ENCODE measurements at regions of chr3 and their contacts with region 1.

Region 1: GRCh38 chr3:28328188-28329151 is 20.1 kb upstream of the ZCWPW2 start:
- DNase-seq: no peak
- ATAC-seq: peak; percentile 40
- H3K4me3 Mint-ChIP-seq: no peak overlapping the region
- H3K27ac Mint-ChIP-seq: no peak overlapping the region
- H3K4me1 Mint-ChIP-seq: no peaks in the 10 kb centered on the region
- H3K27me3 Mint-ChIP-seq: no peaks in the 10 kb centered on the region
- CTCF ChIP-seq: no peak

Region 2: DNA sequence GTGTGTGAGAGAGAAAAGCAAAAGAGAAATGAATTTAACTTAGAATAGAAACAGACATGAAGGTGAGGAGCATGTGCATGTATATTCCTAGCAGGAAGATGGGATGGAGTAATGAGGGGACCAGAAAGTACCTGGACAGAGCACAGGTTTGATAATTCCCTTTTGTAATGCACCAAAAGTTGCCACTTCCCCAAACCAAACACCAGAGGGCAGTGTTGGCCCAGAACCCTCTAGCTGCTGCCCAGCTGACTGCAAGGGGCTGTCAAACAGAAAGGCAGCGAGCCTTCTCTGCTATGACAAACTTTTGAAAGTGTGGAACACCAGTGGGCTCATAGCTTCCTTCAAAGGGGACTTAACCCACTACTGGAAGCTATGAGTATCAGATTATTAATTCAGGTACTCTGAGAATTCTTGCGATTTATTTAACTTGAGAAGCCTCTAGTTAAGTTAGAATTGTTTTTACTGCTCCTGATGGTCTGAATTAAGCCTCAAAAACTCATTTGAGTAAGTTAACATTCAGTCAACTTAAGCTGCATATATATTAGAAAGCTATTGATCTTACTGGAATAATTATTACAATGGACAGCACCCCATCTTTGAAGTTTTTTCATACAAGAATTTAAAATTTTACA is 1194.2 kb before region 1 on chr3:
- CTCF ChIA-PET with region 1: interaction called, 9 read pairs
- POLR2A ChIA-PET with region 1: no interaction called
- intact Hi-C with region 1: loop called (anchors 1 kb)
- DNase-seq: peak; percentile 27
- ATAC-seq: peak; percentile 71
- H3K4me3 Mint-ChIP-seq: no peak overlapping the region
- H3K27ac Mint-ChIP-seq: no peak overlapping the region
- H3K4me1 Mint-ChIP-seq: no peaks in the 10 kb centered on the region
- H3K27me3 Mint-ChIP-seq: no peaks in the 10 kb centered on the region
- CTCF ChIP-seq: peak; percentile 83

Region 3: DNA sequence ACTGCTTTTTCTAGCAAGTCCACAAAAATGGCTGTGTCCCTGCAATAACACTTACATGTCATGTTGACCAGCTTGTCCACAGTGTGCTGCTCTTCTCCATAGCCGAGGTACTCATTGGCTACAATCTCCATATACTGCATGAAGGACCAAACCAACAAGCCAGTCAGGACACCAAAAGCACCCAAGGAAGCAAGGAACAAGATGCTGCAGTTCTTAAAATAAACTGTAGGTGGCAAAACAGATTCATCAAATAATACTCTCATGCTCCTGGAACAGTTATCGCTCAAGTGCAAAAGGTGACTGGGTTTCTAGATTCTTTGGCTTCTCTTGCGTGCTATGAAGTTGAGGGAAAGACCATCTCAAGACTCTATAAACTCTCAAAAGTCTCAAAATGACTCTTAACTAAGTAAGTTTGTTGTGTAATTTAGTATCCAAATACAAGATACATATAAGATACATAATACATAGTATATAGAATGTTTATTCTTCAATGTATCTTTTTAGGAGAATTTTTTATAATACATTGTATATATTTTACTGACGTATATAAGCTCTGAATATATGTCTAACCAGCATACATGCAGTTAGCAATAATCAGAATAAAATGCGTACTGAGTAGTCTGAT is 1016.3 kb before region 1 on chr3:
- CTCF ChIA-PET with region 1: no interaction called
- POLR2A ChIA-PET with region 1: no interaction called
- intact Hi-C with region 1: loop called (anchors 1 kb)
- DNase-seq: no peak
- ATAC-seq: peak; percentile 70
- H3K4me3 Mint-ChIP-seq: no peak overlapping the region
- H3K27ac Mint-ChIP-seq: no peak overlapping the region
- H3K4me1 Mint-ChIP-seq: no peaks in the 10 kb centered on the region
- H3K27me3 Mint-ChIP-seq: no peaks in the 10 kb centered on the region
- CTCF ChIP-seq: peak; percentile 35

Region 4: GRCh38 chr3:27943106-27943505 is 385.4 kb before region 1 on chr3:
- CTCF ChIA-PET with region 1: no interaction called
- POLR2A ChIA-PET with region 1: no interaction called
- intact Hi-C with region 1: loop called (anchors 2 kb)
- DNase-seq: no peak
- ATAC-seq: no peak
- H3K4me3 Mint-ChIP-seq: no peak overlapping the region
- H3K27ac Mint-ChIP-seq: no peak overlapping the region
- H3K4me1 Mint-ChIP-seq: no peaks in the 10 kb centered on the region
- H3K27me3 Mint-ChIP-seq: no peaks in the 10 kb centered on the region
- CTCF ChIP-seq: no peak

Region 5: GRCh38 chr3:28317438-28318022 is 10.9 kb before region 1 on chr3:
- CTCF ChIA-PET with region 1: interaction called, 8 read pairs
- POLR2A ChIA-PET with region 1: no interaction called
- intact Hi-C with region 1: loop called (anchors 2 kb)
- DNase-seq: no peak
- ATAC-seq: peak; percentile 70
- H3K4me3 Mint-ChIP-seq: no peak overlapping the region
- H3K27ac Mint-ChIP-seq: no peak overlapping the region
- H3K4me1 Mint-ChIP-seq: no peaks in the 10 kb centered on the region
- H3K27me3 Mint-ChIP-seq: no peaks in the 10 kb centered on the region
- CTCF ChIP-seq: no peak

Region 6: DNA sequence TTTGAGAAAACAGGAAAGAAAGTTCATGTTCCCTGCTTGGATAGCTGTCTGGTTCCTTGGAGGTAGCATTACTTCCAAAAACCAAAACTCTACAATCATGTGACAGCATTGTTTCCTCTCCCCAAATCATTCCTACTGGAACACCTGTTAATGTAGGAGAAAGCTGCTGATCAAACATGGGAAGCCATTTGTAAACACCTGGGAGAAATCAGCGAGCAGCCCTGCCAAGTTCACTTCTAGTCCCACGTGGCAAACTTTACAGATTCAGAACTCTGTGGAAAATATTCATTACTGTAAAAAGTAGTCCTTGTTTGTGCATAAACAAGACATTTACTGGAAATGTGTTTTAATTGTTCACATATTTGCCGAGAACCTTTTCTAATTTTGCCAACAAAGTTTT is 295.6 kb after region 1 on chr3:
- CTCF ChIA-PET with region 1: no interaction called
- POLR2A ChIA-PET with region 1: no interaction called
- intact Hi-C with region 1: no loop called
- DNase-seq: no peak
- ATAC-seq: no peak
- H3K4me3 Mint-ChIP-seq: no peak overlapping the region
- H3K27ac Mint-ChIP-seq: no peak overlapping the region
- H3K4me1 Mint-ChIP-seq: no peaks in the 10 kb centered on the region
- H3K27me3 Mint-ChIP-seq: no peaks in the 10 kb centered on the region
- CTCF ChIP-seq: no peak

Measured in activated B cell treated with CpG ODN at 0.5 μM for 24 hours (primary cell).